ENCODE measurements at regions of chr1 and their contacts with region 1.

Region 1: DNA sequence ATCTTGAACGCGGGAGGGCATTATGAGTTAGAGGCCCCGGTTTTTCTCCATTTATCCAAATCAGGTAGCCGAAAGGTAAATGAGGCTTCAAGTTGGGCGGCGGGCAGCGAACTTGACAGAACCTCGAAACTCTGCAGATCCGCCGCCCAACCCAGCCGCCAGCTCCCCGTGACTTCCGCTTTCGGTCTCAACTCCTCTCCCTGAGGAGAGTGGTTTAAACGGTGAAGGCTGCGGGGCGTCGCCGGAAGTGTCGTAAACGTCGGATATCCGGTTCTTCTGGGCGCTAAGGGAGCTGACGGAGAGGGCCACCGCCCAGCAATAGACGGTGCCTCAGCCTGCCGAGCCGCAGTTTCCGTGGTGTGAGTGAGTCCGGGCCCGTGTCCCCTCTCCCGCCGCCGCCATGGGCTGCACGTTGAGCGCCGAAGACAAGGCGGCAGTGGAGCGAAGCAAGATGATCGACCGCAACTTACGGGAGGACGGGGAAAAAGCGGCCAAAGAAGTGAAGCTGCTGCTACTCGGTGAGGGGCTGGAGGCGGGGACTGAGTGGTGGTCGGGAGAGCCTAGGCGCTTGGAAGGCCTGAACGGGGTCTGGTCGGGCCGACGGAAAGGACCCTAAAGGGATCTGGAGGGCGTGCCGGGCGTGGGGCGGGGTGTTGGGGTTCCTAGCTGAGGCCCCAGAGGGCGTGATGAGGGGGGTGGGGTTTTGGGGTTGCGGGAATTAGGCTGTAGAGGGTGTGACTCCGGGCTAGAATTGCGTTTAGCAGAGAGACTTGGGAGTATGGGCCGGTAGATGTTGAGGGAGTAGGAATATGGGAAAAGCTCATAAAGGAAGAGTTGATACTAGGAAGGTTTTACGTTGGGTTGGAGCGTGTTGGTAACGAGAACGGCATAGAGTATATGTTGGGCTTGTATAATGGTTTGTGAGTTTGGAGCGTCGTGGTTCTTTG is at the start of gene GNAI3:
- DNase-seq: peak; percentile 96
- ATAC-seq: peak; percentile 93
- H3K4me3 ChIP-seq: peak within 1 kb of the TSS; percentile 66
- H3K27ac ChIP-seq: peak within 1 kb of the TSS; percentile 94
- H3K4me1 ChIP-seq: peaks cover 4% of the 10 kb centered on the region
- H3K27me3 ChIP-seq: no peaks in the 10 kb centered on the region
- CTCF ChIP-seq: no peak
- POLR2A ChIP-seq: peak; percentile 97
- RAD21 ChIP-seq: peak; percentile 15; the same call in 1 of the 2 replicates
- total RNA-seq, gene GNAI3: 14.9 and 25.0 TPM in 2 replicates

Region 2: GRCh38 chr1:109620841-109621286 is 72.3 kb after region 1 on chr1:
- CTCF ChIA-PET with region 1: interaction called, 6 read pairs
- POLR2A ChIA-PET with region 1: interaction called, 5 read pairs
- dilution Hi-C with region 1: no loop called
- in situ Hi-C with region 1: loop called (anchors 5 kb)
- intact Hi-C with region 1: loop called (anchors 2 kb)
- DNase-seq: peak; percentile 95
- ATAC-seq: peak; percentile 80
- H3K4me3 ChIP-seq: peak overlapping the region; percentile 96
- H3K27ac ChIP-seq: peak overlapping the region; percentile 99
- H3K4me1 ChIP-seq: peaks cover 47% of the 10 kb centered on the region
- H3K27me3 ChIP-seq: no peaks in the 10 kb centered on the region
- CTCF ChIP-seq: no peak
- POLR2A ChIP-seq: peak; percentile 31
- RAD21 ChIP-seq: peak; percentile 3; the same call in 1 of the 2 replicates

Region 3: DNA sequence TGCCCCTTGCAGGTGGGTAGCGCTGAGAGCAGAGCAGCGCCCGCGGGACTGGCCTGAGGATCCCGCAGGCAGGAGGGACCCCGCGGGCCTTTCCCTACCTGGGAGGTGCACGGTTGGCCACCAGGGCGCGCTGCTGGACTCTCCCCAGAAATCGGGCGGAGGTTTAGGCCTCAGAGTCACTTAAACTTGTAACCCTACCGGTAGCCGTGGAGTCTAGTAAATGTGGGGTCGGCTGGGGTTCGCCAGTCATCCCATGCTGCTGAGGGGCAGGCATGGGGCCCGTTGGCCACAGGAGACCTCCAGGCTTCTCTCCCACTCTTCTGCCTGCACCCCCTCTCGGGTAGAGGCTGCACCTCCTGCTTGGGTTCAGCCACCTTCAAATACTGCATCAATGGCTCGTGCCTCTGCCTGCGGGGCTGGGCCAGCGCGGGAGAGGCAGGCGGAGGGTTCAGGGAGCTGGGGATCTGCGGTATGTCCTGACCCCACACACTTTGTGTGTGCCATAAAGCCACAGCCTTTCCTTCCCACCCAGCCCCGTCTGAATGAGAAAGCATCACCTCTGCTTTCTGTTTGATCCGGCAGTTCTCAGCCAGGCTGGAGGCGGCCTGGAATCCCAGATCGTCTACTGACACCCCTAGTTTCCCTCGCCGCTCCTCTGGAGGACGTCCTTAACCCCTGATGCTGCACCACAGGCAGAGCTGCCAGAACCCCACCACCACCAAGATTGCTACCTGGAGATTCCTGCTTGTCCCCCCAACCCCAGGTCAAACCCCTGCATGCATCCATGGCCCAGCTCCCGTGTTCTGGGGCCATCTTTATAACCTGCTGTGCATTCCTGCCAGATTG is 95.0 kb after region 1 on chr1:
- CTCF ChIA-PET with region 1: interaction called, 30 read pairs
- POLR2A ChIA-PET with region 1: no interaction called
- dilution Hi-C with region 1: no loop called
- in situ Hi-C with region 1: no loop called
- intact Hi-C with region 1: loop called (anchors 1 kb)
- DNase-seq: peak; percentile 65
- ATAC-seq: peak; percentile 77
- H3K4me3 ChIP-seq: no peak overlapping the region
- H3K27ac ChIP-seq: no peak overlapping the region
- H3K4me1 ChIP-seq: peaks cover 11% of the 10 kb centered on the region
- H3K27me3 ChIP-seq: no peaks in the 10 kb centered on the region
- CTCF ChIP-seq: peak; percentile 84
- POLR2A ChIP-seq: 0 out of 2 replicates have a peak, but pooled peaks have one; percentile 20
- RAD21 ChIP-seq: peak; percentile 87

Region 4: GRCh38 chr1:109760020-109760334 is 211.4 kb after region 1 on chr1:
- CTCF ChIA-PET with region 1: no interaction called
- POLR2A ChIA-PET with region 1: interaction called, 13 read pairs
- dilution Hi-C with region 1: no loop called
- in situ Hi-C with region 1: no loop called
- intact Hi-C with region 1: no loop called
- DNase-seq: no peak
- ATAC-seq: no peak
- H3K4me3 ChIP-seq: no peak overlapping the region
- H3K27ac ChIP-seq: no peak overlapping the region
- H3K4me1 ChIP-seq: peaks cover 12% of the 10 kb centered on the region
- H3K27me3 ChIP-seq: 0 out of 2 replicates have a peak, but pooled peaks cover 2% of the 10 kb centered on the region
- CTCF ChIP-seq: no peak
- POLR2A ChIP-seq: no peak
- RAD21 ChIP-seq: no peak

Region 5: GRCh38 chr1:109773146-109773899 is 224.7 kb after region 1 on chr1:
- CTCF ChIA-PET with region 1: interaction called, 16 read pairs
- POLR2A ChIA-PET with region 1: no interaction called
- dilution Hi-C with region 1: no loop called
- in situ Hi-C with region 1: loop called (anchors 5 kb)
- intact Hi-C with region 1: loop called (anchors 1 kb)
- DNase-seq: peak; percentile 85
- ATAC-seq: peak; percentile 85
- H3K4me3 ChIP-seq: no peak overlapping the region
- H3K27ac ChIP-seq: no peak overlapping the region
- H3K4me1 ChIP-seq: peaks cover 24% of the 10 kb centered on the region
- H3K27me3 ChIP-seq: no peaks in the 10 kb centered on the region
- CTCF ChIP-seq: peak; percentile 99
- POLR2A ChIP-seq: peak; percentile 66
- RAD21 ChIP-seq: peak; percentile 100

Region 6: DNA sequence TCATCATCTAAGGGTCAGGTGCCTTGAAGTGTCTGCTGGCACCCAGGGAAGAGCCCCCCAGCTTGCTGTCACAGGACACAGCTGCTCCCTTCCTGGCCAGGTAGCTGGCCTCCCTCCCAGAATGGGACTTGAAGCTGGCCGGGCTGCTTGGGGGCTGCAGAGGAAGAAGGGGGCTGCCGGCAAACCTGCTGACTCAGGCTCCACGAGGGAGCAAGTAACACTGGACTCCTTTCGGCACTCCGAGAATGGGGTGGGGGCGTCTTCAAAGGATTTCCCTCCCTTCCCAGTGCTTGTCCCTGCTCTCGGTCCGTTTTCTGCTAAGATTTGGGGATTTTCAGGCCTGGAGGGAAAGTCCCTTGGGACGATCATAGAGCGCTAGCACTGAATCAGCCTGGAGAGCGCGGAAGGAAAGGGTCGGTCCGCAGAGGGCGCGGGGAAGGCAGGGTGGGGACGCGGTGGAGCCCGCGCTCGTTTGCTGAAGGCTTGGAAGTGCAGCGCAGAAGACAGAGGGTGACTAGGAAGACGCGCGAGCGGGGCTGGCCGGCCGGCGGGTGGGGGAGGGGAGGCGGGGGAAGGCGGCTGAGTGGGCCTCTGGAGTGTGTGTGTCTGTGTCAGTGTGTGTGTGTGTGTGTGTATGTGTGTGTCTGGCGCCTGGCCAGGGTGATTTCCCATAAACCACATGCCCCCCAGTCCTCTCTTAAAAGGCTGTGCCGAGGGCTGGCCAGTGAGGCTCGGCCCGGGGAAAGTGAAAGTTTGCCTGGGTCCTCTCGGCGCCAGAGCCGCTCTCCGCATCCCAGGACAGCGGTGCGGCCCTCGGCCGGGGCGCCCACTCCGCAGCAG is 361.7 kb after region 1 on chr1 and contains the start of gene CSF1:
- CTCF ChIA-PET with region 1: no interaction called
- POLR2A ChIA-PET with region 1: no interaction called
- dilution Hi-C with region 1: no loop called
- in situ Hi-C with region 1: no loop called
- intact Hi-C with region 1: loop called (anchors 5 kb)
- DNase-seq: peak; percentile 86
- ATAC-seq: peak; percentile 68
- H3K4me3 ChIP-seq: peak within 1 kb of the TSS; percentile 98
- H3K27ac ChIP-seq: peak within 1 kb of the TSS; percentile 85
- H3K4me1 ChIP-seq: peaks cover 25% of the 10 kb centered on the region
- H3K27me3 ChIP-seq: no peaks in the 10 kb centered on the region; the same call in 1 of the 2 replicates
- CTCF ChIP-seq: no peak
- POLR2A ChIP-seq: peak; percentile 84
- RAD21 ChIP-seq: peak; percentile 4; the same call in 1 of the 2 replicates
- total RNA-seq, gene CSF1: 9.4 and 14.3 TPM in 2 replicates

Region 7: DNA sequence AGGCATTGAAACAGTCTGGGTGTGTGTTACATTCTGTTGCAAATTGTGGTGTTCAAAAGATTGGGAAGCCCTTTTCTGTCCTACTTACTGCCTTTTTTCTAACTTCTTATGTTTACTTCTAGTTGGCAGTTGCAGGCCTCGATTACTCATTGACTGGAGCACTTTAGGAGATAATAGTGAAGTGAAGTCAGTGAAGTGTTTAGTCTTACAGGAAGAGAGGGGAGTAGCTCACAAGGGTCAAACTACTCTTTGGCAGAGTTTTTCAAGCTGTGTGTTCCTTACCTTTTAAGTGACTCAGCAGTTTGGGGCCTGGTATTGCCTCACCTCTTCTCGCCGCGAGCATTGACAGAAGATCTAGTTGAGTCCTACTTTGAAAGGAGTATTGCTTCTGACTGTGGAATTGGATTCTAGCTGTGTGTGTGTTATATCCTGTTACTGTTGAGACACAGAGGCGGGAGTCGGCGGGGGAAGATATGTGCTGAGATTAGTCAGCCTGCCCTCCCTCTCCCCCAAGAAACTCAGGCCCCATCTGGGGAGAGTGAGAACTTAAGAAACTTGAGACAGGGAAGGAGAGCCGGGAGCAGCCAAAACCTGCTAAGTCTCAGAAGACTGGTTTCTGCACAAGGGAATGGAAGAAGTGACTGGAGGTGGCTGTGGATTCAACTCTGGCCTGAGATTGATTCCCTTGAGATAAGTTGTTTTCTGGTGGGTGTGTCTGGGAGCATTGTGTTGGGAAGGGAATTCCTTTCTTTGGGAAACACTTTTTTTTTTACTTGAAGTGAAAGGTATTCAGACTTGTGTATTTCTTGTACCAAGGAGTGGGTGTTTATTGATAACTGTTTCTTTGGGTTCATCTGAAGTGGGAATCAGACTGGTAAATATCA is 455.4 kb after region 1 on chr1:
- CTCF ChIA-PET with region 1: no interaction called
- POLR2A ChIA-PET with region 1: no interaction called
- dilution Hi-C with region 1: no loop called
- in situ Hi-C with region 1: no loop called
- intact Hi-C with region 1: loop called (anchors 5 kb)
- DNase-seq: peak; percentile 99
- ATAC-seq: peak; percentile 90
- H3K4me3 ChIP-seq: peak overlapping the region; percentile 29; the same call in 1 of the 2 replicates
- H3K27ac ChIP-seq: peak overlapping the region; percentile 50
- H3K4me1 ChIP-seq: peaks cover 17% of the 10 kb centered on the region
- H3K27me3 ChIP-seq: no peaks in the 10 kb centered on the region
- CTCF ChIP-seq: no peak
- POLR2A ChIP-seq: peak; percentile 67
- RAD21 ChIP-seq: no peak

Measured in IMR-90 (cell line).